Prostate gland (tissue), 2 donors: ENCODE measurements at regions of chr4 and their contacts with region 1.

Region 1: DNA sequence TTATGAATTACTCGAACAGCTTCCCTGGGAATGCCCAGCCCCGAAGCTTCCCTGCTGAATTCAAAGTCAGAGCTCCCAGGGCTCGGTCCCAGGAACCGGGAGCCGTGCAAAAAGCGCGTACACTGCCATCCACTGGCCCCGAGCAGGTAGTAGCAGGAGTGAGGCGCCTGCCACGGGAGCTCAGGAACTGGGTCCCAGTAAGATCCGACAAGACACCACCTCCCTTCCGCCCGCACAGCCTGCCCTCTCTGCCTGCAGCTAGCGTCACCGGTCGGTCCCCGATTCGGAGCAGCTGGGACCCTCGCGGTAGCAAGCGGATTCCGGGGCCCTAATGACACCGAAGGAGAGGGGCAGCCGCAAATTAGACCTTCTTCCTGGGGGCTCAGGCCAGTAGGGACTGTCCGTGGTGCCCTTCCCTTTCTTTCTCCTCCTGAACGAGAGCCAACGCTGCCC is 1.2 kb downstream of the CORIN start:
- DNase-seq: peak; percentile 85
- H3K4me3 ChIP-seq: peak overlapping the region; percentile 42 to 46
- H3K27ac ChIP-seq: peak overlapping the region; percentile 3 to 43
- H3K4me1 ChIP-seq: no peaks in the 10 kb centered on the region
- H3K27me3 ChIP-seq: no peaks in the 10 kb centered on the region
- CTCF ChIP-seq: peak; percentile 11 to 71 (median 63)
- POLR2A ChIP-seq: no peak

Region 2: GRCh38 chr4:46329118-46329976 is 1507.3 kb before region 1 on chr4:
- intact Hi-C with region 1: no loop called
- DNase-seq: no peak
- H3K4me3 ChIP-seq: no peak overlapping the region
- H3K27ac ChIP-seq: no peak overlapping the region
- H3K4me1 ChIP-seq: no peaks in the 10 kb centered on the region
- H3K27me3 ChIP-seq: no peaks in the 10 kb centered on the region
- CTCF ChIP-seq: no peak
- POLR2A ChIP-seq: no peak

Region 3: DNA sequence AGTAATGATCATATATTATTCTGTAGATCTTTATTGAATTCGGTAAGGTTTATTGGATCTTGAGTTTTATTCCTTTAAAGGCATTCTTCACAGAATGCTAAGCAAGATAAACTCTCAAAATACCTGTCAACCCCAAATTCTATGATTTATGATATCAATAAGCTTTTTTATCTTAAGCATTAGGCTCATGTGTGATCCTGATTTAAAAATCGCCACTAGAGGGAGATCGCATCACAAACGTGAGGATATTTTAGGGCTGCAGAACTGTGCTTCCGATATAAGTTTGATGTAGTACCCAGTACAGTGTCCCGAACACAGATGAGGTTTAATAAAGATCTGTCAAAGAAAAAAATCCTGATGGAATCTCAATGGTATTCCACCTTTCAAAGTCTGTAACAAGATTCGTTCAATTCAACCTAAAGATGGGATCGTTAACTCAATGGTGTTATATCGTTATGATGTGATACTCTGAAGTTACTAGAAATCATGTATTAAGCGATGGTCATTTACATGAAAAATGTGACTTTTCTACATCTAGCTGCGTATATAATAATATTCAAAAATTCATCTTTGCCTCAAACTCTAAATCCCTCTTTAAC is 167.8 kb before region 1 on chr4:
- intact Hi-C with region 1: loop called (anchors 2 kb)
- DNase-seq: peak; percentile 38
- H3K4me3 ChIP-seq: no peak overlapping the region
- H3K27ac ChIP-seq: no peak overlapping the region
- H3K4me1 ChIP-seq: no peaks in the 10 kb centered on the region
- H3K27me3 ChIP-seq: no peaks in the 10 kb centered on the region
- CTCF ChIP-seq: peak; percentile 53 to 74 (median 68)
- POLR2A ChIP-seq: no peak

Region 4: GRCh38 chr4:47686294-47686872 is 150.3 kb before region 1 on chr4:
- intact Hi-C with region 1: loop called (anchors 5 kb)
- DNase-seq: peak; percentile 26
- H3K4me3 ChIP-seq: no peak overlapping the region
- H3K27ac ChIP-seq: no peak overlapping the region
- H3K4me1 ChIP-seq: no peaks in the 10 kb centered on the region
- H3K27me3 ChIP-seq: no peaks in the 10 kb centered on the region
- CTCF ChIP-seq: peak in 3 of 4 experiments; percentile 46 to 49 (median 49)
- POLR2A ChIP-seq: no peak

Region 5: GRCh38 chr4:47704693-47705325 is 131.9 kb before region 1 on chr4:
- intact Hi-C with region 1: loop called (anchors 5 kb)
- DNase-seq: peak; percentile 27
- H3K4me3 ChIP-seq: no peak overlapping the region
- H3K27ac ChIP-seq: no peak overlapping the region
- H3K4me1 ChIP-seq: no peaks in the 10 kb centered on the region
- H3K27me3 ChIP-seq: no peaks in the 10 kb centered on the region
- CTCF ChIP-seq: peak in 1 of 4 experiments; percentile 45
- POLR2A ChIP-seq: no peak

Region 6: DNA sequence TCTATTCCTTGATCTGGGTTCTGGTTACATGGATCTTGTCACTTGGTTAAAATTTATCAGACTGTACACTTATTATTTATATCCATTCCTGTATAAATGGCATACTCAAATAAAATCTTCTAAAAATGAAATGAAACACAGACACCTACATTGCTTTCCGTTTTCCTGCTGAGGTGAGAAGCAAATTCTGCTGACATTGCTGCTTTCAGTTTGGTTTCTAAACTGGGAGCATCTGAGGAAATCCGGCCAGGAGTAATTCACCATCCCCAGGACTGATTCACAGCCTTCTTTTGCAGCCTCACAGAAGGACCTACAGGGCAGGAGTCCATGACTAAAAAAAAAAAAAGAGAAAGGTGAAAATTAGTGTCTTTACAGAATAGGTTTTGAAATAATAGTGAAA is 92.4 kb before region 1 on chr4:
- intact Hi-C with region 1: no loop called
- DNase-seq: no peak
- H3K4me3 ChIP-seq: no peak overlapping the region
- H3K27ac ChIP-seq: no peak overlapping the region
- H3K4me1 ChIP-seq: no peaks in the 10 kb centered on the region
- H3K27me3 ChIP-seq: no peaks in the 10 kb centered on the region
- CTCF ChIP-seq: no peak
- POLR2A ChIP-seq: no peak